Sigmoid colon (tissue), 7 donors: ENCODE measurements at regions of chr19 and their contacts with region 1.

Region 1: DNA sequence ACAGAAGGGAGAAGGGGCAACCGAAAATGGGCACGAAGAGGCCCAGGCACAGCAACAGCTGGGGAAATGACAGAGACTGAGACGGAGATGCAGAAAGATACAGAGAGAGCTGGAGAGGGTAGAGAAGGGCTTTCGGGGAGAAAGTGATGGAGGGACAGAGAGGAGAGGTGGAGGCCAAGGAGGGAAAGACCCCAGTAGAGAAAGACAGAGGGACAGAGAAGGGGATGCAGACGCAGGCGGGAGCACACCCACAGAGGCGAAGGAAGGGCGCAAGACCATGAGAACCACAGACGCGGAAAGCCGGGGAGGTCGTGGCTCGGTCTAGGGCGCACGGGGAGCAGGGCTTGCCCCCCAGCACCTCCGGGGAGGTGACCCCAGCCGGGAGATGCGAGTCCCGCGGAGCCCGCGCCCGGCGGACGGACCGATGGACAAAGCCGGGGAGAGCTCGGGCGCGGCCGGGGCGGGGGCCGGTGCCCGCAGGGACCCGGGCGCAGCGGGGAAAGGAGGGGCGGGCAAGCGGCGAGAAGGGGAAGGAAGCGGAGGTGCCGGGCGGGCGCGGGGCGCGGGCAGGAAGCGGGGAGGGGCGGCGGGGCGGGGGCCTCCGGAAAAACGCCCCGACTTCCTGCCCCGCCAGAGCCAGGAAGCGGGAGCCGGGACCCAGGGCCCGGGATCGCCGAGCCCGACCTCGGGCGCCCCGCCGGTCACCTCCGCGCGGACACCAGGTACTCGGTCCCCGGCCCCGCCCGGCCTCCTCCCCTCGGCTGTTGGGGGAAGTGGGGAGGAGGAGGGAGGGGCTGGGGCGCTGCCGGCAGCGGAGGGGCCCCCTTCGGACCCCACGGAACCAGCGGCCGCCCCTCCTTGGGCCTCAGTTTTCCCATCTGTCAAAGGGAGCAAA is at the start of gene ARHGEF1:
- DNase-seq: peak; percentile 76
- H3K4me3 ChIP-seq: peak within 1 kb of the TSS; percentile 81 to 97 (median 90)
- H3K27ac ChIP-seq: peak within 1 kb of the TSS; percentile 72 to 86 (median 84)
- H3K4me1 ChIP-seq: peaks cover 0 to 38% (median 17%) of the 10 kb centered on the region in 4 donors
- H3K27me3 ChIP-seq: no peaks in the 10 kb centered on the region
- CTCF ChIP-seq: no peak
- EP300 ChIP-seq: no peak
- POLR2A ChIP-seq: no peak
- total RNA-seq, gene ARHGEF1: 31.8 to 65.4 (median 34.8) TPM

Region 2: GRCh38 chr19:41859618-41860418 is 23.0 kb before region 1 on chr19 and contains the start of gene RPS19:
- intact Hi-C with region 1: loop called (anchors 1 kb)
- DNase-seq: peak; percentile 99
- H3K4me3 ChIP-seq: peak within 1 kb of the TSS; percentile 84 to 98 (median 89)
- H3K27ac ChIP-seq: peak within 1 kb of the TSS; percentile 88 to 97 (median 94)
- H3K4me1 ChIP-seq: peaks cover 0 to 39% (median 31%) of the 10 kb centered on the region in 4 donors
- H3K27me3 ChIP-seq: no peaks in the 10 kb centered on the region
- CTCF ChIP-seq: peak; percentile 60 to 92 (median 78)
- EP300 ChIP-seq: no peak
- POLR2A ChIP-seq: peak; percentile 47 to 61
- total RNA-seq, gene RPS19: 738 to 1,695 (median 1,093) TPM

Region 3: GRCh38 chr19:41904118-41904870 is 21.5 kb after region 1 on chr19:
- intact Hi-C with region 1: no loop called
- DNase-seq: no peak
- H3K4me3 ChIP-seq: no peak overlapping the region
- H3K27ac ChIP-seq: no peak overlapping the region
- H3K4me1 ChIP-seq: no peaks in the 10 kb centered on the region
- H3K27me3 ChIP-seq: no peaks in the 10 kb centered on the region
- CTCF ChIP-seq: no peak
- EP300 ChIP-seq: no peak
- POLR2A ChIP-seq: peak in 1 of 2 donors; percentile 41

Region 4: GRCh38 chr19:41934849-41935374 is 52.1 kb after region 1 on chr19:
- intact Hi-C with region 1: no loop called
- DNase-seq: peak; percentile 75
- H3K4me3 ChIP-seq: no peak overlapping the region
- H3K27ac ChIP-seq: no peak overlapping the region
- H3K4me1 ChIP-seq: peaks cover 0 to 8% (median 4%) of the 10 kb centered on the region in 4 donors
- H3K27me3 ChIP-seq: peaks cover 29 to 93% (median 67%) of the 10 kb centered on the region in 3 donors
- CTCF ChIP-seq: peak; percentile 18 to 82 (median 74)
- EP300 ChIP-seq: no peak
- POLR2A ChIP-seq: no peak